Right ventricle myocardium superior (tissue), 1 donor: ENCODE measurements at regions of chr22 and their contacts with region 1.

Region 1: GRCh38 chr22:32579509-32580234 is 105.1 kb downstream of the FBXO7 start:
- DNase-seq: peak; percentile 57
- ATAC-seq: peak; percentile 18

Region 2: DNA sequence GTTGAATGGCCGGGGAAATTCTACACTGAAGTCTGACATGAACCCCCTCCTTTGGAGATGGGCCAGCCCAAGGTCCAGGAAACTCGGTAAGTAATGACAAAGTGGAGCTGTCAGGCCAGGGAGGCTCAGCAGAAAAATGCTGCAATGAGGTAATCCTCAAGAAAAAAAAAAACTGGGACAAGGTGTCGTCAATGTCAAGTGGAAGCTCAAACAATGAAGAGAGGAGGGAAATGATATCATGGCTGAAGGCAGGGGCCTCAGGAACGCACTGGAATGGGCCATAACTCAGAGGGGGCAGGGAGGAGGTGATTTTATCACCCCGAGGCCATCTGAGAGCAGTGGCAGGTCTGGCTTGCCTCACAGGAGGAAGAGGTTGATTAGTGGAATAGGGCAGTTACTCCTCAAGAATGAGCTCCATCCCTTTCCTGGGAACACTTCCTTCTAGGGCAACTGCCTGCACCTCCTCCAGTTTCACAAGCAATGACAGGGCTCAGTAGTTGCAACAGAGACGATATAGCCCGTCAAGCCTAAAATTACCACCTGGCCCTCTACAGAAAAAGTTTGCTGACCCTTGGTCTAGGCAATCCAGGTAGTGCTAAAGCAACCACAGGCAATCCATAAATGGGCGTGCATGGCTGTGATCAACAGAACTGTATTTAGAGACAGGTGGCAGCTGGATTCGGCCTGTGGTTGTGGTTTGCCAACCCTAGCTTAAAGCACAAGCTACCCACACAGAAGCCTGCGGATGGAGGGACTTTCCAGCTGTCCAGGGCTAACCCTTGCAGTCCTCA is 39.8 kb before region 1 on chr22:
- intact Hi-C with region 1: loop called (anchors 5 kb)
- DNase-seq: no peak
- ATAC-seq: no peak

Region 3: DNA sequence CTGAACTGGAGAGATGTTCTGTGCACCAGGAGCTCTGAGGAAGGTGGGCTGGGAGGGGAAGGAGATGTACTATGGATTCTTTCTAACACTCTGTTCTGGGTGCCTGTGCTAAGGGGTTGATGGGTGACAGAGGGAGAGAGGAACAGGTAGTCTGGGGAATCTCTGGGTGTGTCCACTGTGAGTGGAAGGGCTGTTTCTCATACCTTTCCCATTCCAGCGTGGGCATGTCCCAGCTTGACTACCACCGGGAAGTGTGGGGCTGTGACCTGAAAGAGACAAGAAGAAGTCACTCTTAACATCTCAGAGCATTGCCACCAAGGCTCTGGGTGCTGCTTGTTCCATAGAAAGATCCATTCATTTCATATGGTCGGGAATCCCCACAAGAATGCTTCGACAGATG is 16.8 kb after region 1 on chr22:
- intact Hi-C with region 1: no loop called
- DNase-seq: no peak
- ATAC-seq: no peak

Region 4: DNA sequence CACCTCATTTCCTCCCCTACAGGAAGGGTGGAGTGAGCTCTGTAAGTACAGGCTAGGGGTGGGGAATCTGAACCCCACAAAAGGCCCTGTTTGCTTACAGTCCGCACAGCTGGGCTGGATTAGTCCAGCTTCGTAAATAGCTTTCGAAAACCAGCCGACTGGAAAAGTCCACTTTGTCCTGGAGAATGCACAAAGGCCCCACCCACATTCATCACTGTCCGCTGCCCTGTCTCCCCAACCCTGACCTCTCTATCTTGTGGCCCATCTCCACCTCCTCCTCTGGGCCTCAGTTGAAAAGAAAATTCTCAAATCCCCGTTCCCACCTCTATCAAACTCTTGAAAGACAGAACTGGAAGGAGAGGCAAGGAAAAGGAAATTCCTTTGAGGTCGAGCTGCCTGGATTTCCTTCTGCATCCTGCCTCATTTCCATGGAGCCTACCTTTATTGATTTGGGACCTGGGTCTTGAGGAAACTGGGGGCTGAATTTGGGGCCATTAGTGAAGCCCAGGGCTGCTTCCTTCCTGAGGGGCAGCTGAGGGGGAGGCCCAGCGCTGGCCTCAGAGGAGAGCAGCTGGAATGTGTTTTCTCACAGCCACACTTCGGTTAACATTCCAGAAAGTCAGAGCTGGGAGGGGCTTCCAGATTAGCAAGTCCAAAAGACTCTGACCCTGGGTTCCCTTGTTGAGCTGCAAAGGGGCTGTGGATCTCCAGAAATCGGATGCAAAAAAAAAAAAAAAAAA is 42.5 kb after region 1 on chr22:
- intact Hi-C with region 1: loop called (anchors 5 kb)
- DNase-seq: peak; percentile 64
- ATAC-seq: peak; percentile 66